Gastrocnemius medialis (tissue), 4 donors: ENCODE measurements at regions of chr6 and their contacts with region 1.

Region 1: DNA sequence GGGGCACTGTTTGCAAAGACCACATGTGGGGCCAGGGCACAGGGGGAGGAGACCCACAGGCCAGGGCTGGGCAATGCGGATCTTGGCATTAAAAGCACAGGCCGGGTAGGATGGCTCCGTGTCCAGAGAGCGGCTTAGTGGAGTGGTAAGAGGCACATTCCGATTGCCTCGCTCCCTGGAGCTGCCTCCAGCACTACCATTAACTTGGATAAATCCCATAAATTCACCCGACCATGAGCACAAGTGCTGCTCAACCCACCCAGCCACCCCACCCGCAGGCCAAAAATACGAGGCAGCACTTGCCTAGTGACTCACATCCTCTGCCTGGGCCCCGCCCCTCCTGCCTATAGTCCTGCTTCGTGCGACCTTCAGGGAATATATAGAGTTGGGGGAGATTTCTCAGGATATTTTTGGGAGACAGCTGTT is 67.5 kb upstream of the QKI start:
- DNase-seq: peak in 1 of 2 donors; percentile 69
- ATAC-seq: peak; percentile 55 to 69
- H3K4me3 ChIP-seq: peak overlapping the region; percentile 38 to 45 (median 44)
- H3K27ac ChIP-seq: peak overlapping the region; percentile 73 to 93 (median 86)
- H3K4me1 ChIP-seq: peaks cover 16 to 26% of the 10 kb centered on the region in 2 donors
- H3K27me3 ChIP-seq: no peaks in the 10 kb centered on the region
- CTCF ChIP-seq: no peak
- POLR2A ChIP-seq: peak in 1 of 2 donors; percentile 48

Region 2: DNA sequence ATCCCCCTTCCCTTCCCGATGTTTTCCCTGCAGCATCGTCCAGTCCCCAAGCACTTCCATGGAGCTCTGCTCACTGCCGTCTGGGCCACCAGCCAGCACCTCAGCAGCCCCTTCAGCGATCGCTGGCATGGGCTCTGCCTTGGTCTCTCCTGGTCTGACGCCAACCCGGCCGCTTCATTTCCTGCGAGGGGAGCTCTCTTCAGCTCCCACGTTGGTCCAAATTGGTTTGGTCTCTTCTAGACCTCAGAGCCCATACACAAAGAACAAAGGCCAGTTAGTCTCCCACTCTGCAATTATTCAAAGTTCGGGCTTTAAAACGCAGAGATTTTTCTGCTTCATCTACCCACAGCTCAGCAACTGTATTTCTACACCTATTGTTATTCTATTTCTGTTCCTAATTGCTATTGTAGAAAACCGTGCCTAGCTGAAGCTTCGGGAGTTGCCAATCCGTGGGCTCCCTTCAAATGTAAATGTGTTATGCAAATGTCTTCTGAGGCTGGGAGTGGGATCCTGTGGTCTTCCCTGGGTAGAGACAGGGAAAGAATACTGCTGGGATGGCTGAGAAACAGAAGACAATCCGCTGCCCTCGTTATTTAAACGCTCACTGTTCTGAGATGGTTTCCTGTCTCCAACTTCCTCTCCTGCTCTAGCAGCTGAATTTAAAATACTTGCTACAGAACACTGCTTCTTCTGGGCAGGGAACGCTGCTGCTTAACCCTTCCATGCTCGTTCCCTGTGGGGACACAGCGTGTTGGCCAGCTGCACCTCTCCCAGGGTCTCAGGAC is 86.7 kb before region 1 on chr6:
- in situ Hi-C with region 1: no loop called
- intact Hi-C with region 1: loop called (anchors 5 kb)
- DNase-seq: no peak
- ATAC-seq: no peak
- H3K4me3 ChIP-seq: peak overlapping the region; percentile 32 to 41 (median 37)
- H3K27ac ChIP-seq: peak overlapping the region in 2 of 4 donors; percentile 10 to 22
- H3K4me1 ChIP-seq: peaks cover 23 to 27% of the 10 kb centered on the region in 2 donors
- H3K27me3 ChIP-seq: no peaks in the 10 kb centered on the region
- CTCF ChIP-seq: no peak
- POLR2A ChIP-seq: no peak

Region 3: DNA sequence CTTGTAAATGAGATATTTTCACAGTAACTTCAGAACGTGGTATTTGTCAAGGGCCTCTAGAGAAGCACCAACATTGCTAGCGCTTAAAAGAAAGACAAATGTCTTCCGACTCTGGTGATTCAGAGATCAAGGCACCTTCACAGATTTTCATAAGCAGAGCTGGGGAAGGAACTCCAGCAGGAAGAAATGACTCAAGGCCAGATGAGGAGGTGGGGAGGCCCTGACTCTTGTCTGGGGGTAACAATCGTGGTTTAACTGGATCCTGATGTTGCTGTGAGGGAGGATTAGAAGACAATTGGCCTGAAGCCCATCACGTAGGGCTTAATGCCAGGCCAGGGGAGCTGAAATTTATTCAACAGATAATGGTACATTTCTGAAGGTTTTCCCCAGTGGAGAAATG is 55.4 kb before region 1 on chr6:
- in situ Hi-C with region 1: no loop called
- intact Hi-C with region 1: loop called (anchors 2 kb)
- DNase-seq: no peak
- ATAC-seq: no peak
- H3K4me3 ChIP-seq: no peak overlapping the region
- H3K27ac ChIP-seq: peak overlapping the region; percentile 81 to 85 (median 84)
- H3K4me1 ChIP-seq: peaks cover 10 to 13% of the 10 kb centered on the region in 2 donors
- H3K27me3 ChIP-seq: no peaks in the 10 kb centered on the region
- CTCF ChIP-seq: no peak
- POLR2A ChIP-seq: no peak

Region 4: GRCh38 chr6:163392533-163392932 is 45.5 kb after region 1 on chr6:
- in situ Hi-C with region 1: loop called in 1 of 4 experiments (anchors 5 kb)
- intact Hi-C with region 1: no loop called
- DNase-seq: no peak
- ATAC-seq: peak; percentile 43 to 56
- H3K4me3 ChIP-seq: no peak overlapping the region
- H3K27ac ChIP-seq: no peak overlapping the region
- H3K4me1 ChIP-seq: peaks cover 13 to 25% of the 10 kb centered on the region in 2 donors
- H3K27me3 ChIP-seq: no peaks in the 10 kb centered on the region
- CTCF ChIP-seq: no peak
- POLR2A ChIP-seq: no peak

Region 5: GRCh38 chr6:163405412-163406309 is 58.6 kb after region 1 on chr6:
- in situ Hi-C with region 1: loop called in 1 of 4 experiments (anchors 10 kb)
- intact Hi-C with region 1: loop called (anchors 2 kb)
- DNase-seq: peak; percentile 68 to 86
- ATAC-seq: peak; percentile 83 to 90
- H3K4me3 ChIP-seq: peak overlapping the region; percentile 45 to 55 (median 50)
- H3K27ac ChIP-seq: peak overlapping the region; percentile 85 to 92 (median 88)
- H3K4me1 ChIP-seq: peaks cover 23 to 27% of the 10 kb centered on the region in 2 donors
- H3K27me3 ChIP-seq: no peaks in the 10 kb centered on the region
- CTCF ChIP-seq: no peak
- POLR2A ChIP-seq: peak; percentile 26 to 37